ENCODE measurements at regions of chr6 and their contacts with region 1.

Region 1: DNA sequence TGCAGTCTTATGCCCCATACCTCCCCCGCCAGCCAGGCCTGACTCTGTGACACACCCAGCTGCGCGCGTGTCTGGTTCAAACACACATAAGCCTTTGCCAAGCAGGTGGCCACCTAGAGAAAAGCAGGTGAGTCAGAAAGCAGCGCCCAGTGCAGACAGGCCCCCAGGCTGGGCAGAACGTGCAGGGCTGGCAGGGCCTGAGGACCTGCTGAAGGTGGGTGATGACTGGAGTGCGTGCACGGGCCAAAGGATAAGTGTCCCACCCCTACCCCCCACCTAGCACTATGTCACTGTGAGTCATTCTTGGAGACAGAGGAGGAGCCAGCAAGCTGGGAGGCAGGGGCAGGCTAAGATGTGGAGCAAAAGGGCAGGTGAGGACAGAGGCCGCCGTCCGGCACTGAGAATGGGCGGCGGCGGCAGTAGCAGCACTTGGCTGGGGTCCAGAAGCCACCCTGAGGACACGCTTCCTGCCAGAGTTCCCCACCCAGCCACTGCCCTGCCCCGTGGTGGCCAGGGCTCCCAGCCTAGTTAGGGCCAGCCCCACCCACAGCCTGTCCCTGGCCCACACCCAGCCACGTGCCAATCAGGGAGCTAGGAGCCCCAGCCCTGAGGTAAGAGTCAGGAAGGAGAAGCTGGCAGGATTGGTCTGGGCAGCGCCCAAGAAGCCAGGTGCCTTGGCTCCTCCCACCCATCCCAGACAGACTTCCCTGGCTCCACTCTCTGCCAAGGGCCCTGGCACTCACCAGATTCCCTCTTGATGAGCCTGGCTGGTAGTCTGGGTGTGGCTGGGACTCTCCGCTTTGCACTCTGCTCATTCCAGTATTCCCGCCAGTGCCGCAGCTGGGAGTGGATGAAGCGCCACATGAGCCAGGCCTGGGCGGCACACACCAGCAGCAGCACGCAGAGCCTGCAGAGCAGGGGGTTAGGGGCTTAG is 72.7 kb downstream of the TRAM2 start:
- DNase-seq: peak; percentile 94

Region 2: DNA sequence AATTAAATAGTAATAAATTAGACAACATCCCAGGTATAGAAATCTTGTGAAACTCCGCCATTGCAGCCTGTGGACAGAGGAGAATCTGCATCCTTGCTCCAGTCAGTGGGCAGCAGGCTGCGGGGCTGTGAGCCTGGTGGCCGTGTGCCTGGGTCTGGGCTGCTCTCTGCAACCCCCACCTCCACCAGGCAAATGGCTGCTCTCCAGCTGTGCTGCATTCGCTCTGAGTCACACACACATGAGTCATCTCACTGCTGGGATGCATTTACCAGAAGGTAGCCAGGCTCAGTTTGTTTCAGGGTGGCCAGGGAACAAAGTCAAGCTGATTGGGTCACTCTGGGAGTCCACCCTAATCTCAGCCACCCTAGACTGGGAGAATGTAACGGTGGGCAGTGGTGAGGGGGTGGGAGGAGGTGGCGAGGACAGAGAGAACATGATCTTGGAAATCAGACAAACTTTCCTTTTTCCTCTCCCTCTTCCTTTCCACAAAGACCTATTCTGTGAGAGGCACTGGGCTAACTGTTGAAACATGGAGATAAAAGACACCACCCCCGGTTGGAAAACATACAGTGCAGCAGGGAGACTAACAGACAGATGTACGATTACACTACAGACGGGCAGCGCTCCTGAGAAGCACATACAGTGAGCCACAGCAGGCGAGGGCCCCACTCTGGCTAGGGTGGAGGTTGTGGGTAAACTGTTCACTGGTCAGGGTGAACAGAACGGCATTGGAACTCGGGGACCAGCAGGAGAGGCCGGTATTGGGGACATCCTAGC is 13.6 kb after region 1 on chr6:
- intact Hi-C with region 1: loop called (anchors 2 kb)
- DNase-seq: peak; percentile 94

Region 3: GRCh38 chr6:52598123-52598823 is 94.2 kb after region 1 on chr6:
- intact Hi-C with region 1: loop called (anchors 5 kb)
- DNase-seq: no peak

Region 4: DNA sequence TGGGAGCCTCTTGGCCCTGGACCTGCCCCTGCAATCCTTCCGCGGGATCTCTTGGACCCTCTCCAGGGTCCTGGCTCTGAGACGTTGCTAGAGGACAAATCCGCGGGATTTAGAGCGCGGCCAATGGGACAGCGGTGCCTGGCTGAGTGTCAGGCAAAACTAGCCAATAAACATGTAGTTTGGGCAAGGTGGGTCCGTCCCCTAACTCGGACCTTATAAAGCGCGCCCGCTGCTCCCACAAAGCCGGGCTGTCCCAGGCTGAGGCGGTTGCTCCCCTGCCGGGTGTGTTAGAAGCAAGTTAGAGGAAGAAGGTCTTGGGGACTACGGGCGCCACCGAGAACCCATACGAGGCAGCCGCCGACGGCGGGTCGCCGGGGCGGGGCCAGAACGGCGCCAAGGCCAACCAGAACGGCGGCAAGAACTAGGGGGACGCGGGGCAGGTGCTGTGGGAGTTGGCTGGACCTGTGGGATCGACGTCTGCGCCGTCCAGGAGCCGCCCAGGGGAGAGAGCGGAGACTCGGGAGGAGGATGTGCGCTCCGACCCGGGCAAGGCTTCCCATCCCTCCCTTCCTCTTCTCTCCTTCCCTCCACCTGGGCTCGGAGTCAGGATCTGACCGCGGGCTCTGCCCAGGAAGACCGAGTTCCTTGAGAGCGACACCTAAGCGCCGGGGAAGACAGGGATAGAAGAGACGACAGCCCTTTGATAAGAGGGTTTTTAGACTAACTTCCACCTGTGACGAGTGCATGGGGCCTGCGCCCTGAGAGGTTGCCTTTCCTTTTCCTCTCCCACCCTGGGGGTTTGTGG is 160.3 kb after region 1 on chr6:
- intact Hi-C with region 1: loop called (anchors 5 kb)
- DNase-seq: peak; percentile 94